ENCODE measurements at regions of chr1 and their contacts with region 1.

Region 1: DNA sequence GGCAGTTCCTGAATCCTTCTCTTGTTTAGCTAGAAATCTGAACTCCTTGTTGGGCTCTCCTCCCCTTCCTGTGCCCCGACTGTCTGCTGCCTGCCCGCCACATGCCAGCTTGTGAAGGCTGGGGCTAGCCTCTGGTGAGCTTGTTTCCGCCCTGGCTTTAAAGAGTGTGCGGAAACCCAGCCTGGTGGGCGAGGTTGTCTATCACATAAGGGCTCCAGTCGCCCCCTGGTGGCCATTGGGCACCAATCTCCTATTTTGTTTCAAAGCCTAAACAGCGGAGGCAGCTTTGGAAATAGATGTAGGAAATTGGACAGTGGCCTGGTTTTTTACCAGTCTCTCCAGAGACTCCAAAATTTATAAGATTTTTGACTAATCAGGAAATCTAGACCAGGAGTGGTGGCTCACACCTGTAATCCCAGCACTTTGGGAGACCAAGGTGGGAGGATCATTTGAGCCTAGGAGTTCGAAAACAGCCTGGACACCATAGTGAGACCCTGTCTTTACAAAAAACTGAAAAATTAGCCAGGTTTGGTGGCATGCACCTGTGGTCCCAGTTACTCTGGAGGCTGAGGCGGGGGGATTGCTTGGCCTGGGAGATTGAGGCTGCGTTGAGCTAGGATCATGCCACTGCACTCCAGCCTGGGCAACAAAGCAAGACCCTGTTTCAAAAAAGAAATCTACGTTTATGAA is 9.8 kb downstream of the ATP8B2 start:
- DNase-seq: peak; percentile 84
- H3K4me3 ChIP-seq: no peak overlapping the region
- H3K27ac ChIP-seq: no peak overlapping the region
- H3K4me1 ChIP-seq: peaks cover 4% of the 10 kb centered on the region
- H3K27me3 ChIP-seq: no peaks in the 10 kb centered on the region
- CTCF ChIP-seq: peak; percentile 84 to 90
- POLR2A ChIP-seq: no peak

Region 2: GRCh38 chr1:154193821-154194220 is 141.3 kb before region 1 on chr1:
- CTCF ChIA-PET with region 1: interaction called, 49 read pairs
- POLR2A ChIA-PET with region 1: no interaction called
- dilution Hi-C with region 1: no loop called
- intact Hi-C with region 1: loop called (anchors 1 kb)
- DNase-seq: no peak
- H3K4me3 ChIP-seq: no peak overlapping the region
- H3K27ac ChIP-seq: no peak overlapping the region
- H3K4me1 ChIP-seq: peaks cover 23% of the 10 kb centered on the region
- H3K27me3 ChIP-seq: peaks cover 10 to 14% of the 10 kb centered on the region in 2 experiments
- CTCF ChIP-seq: no peak
- POLR2A ChIP-seq: no peak

Region 3: GRCh38 chr1:154263465-154264332 is 71.5 kb before region 1 on chr1:
- CTCF ChIA-PET with region 1: interaction called, 28 read pairs
- POLR2A ChIA-PET with region 1: no interaction called
- dilution Hi-C with region 1: no loop called
- intact Hi-C with region 1: no loop called
- DNase-seq: peak; percentile 7
- H3K4me3 ChIP-seq: no peak overlapping the region
- H3K27ac ChIP-seq: no peak overlapping the region
- H3K4me1 ChIP-seq: peaks cover 5% of the 10 kb centered on the region
- H3K27me3 ChIP-seq: no peaks in the 10 kb centered on the region
- CTCF ChIP-seq: no peak
- POLR2A ChIP-seq: no peak

Region 4: GRCh38 chr1:154318386-154318785 is 16.8 kb before region 1 on chr1:
- CTCF ChIA-PET with region 1: interaction called, 210 read pairs
- POLR2A ChIA-PET with region 1: no interaction called
- dilution Hi-C with region 1: no loop called
- intact Hi-C with region 1: no loop called
- DNase-seq: no peak
- H3K4me3 ChIP-seq: no peak overlapping the region
- H3K27ac ChIP-seq: no peak overlapping the region
- H3K4me1 ChIP-seq: no peaks in the 10 kb centered on the region
- H3K27me3 ChIP-seq: peaks cover 0 to 8% of the 10 kb centered on the region in 2 experiments
- CTCF ChIP-seq: no peak
- POLR2A ChIP-seq: no peak

Region 5: GRCh38 chr1:154344977-154345837 is 10.0 kb after region 1 on chr1:
- CTCF ChIA-PET with region 1: interaction called, 67 read pairs
- POLR2A ChIA-PET with region 1: no interaction called
- dilution Hi-C with region 1: no loop called
- intact Hi-C with region 1: no loop called
- DNase-seq: peak; percentile 41
- H3K4me3 ChIP-seq: no peak overlapping the region
- H3K27ac ChIP-seq: no peak overlapping the region
- H3K4me1 ChIP-seq: peaks cover 6% of the 10 kb centered on the region
- H3K27me3 ChIP-seq: no peaks in the 10 kb centered on the region
- CTCF ChIP-seq: peak; percentile 77 to 80
- POLR2A ChIP-seq: no peak

Region 6: GRCh38 chr1:154361357-154361756 is 26.2 kb after region 1 on chr1:
- CTCF ChIA-PET with region 1: interaction called, 12 read pairs
- POLR2A ChIA-PET with region 1: no interaction called
- dilution Hi-C with region 1: no loop called
- intact Hi-C with region 1: no loop called
- DNase-seq: no peak
- H3K4me3 ChIP-seq: no peak overlapping the region
- H3K27ac ChIP-seq: no peak overlapping the region
- H3K4me1 ChIP-seq: no peaks in the 10 kb centered on the region
- H3K27me3 ChIP-seq: no peaks in the 10 kb centered on the region
- CTCF ChIP-seq: no peak
- POLR2A ChIP-seq: no peak

Region 7: DNA sequence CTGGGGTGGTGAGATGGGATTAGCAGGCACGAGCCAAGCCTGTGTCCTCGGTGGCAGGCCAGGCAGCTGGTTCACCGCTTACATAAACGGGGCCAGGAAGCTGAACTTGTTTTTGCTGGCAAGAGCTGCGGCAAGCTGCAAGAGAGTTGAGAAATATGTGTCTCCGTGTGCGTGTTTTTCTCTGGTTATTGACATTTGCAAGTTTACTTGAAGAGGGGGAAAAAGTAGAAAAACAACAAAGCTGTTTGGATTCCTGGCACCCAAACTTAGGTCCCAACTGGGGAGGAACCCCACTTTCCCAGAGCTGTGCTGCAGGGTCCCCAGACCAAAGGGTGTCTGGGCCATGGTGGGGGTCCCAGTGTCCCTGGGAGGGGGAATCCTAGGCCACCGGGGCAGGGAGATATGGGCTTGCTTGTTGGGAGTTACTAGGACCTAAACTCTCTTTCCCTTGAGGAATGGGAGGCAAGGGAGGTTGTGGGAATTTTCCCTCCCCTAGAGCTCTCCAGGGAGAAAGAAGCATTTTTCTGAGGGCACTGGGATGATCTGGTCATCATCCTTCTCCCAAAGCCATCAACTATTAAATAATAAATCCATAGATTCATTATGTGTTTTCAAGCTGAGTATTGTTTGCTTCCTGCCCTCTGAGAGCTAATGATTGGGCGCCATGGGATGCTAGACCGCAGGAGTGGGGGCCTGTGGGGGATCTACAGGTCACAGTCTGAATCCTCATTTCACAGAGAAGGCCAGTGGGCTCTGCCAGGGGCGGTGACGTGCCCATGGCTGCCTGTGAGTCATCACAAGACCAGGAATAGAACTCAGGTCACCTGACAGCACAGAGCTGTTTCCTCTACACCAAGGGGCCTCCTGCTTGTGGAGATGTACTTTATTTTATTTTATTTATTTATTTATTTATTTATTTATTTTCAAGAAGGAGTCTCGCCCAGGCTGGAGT is 84.7 kb after region 1 on chr1:
- CTCF ChIA-PET with region 1: interaction called, 10 read pairs
- POLR2A ChIA-PET with region 1: no interaction called
- dilution Hi-C with region 1: no loop called
- intact Hi-C with region 1: no loop called
- DNase-seq: peak; percentile 96
- H3K4me3 ChIP-seq: no peak overlapping the region
- H3K27ac ChIP-seq: peak overlapping the region; percentile 89
- H3K4me1 ChIP-seq: peaks cover 43% of the 10 kb centered on the region
- H3K27me3 ChIP-seq: no peaks in the 10 kb centered on the region
- CTCF ChIP-seq: no peak
- POLR2A ChIP-seq: no peak